Dorsolateral prefrontal cortex (tissue), 120 donors: ENCODE measurements at regions of chr10 and their contacts with region 1.

Region 1: GRCh38 chr10:114304017-114304570 is 65.0 kb downstream of the VWA2 start:
- DNase-seq: peak; percentile 74 to 93 (median 87)
- H3K4me3 ChIP-seq: peak overlapping the region; percentile 29 to 73 (median 60)
- H3K27ac ChIP-seq: peak overlapping the region in 58 of 59 donors; percentile 27 to 95 (median 79)
- H3K27me3 ChIP-seq: no peaks in the 10 kb centered on the region
- CTCF ChIP-seq: peak; percentile 76 to 94 (median 86)

Region 2: GRCh38 chr10:114403541-114404161 is 99.6 kb after region 1 on chr10:
- intact Hi-C with region 1: loop called in 1 of 2 experiments (anchors 5 kb)
- DNase-seq: peak in 2 of 10 donors; percentile 41 to 43
- H3K4me3 ChIP-seq: peak overlapping the region; percentile 36 to 75 (median 61)
- H3K27ac ChIP-seq: peak overlapping the region in 55 of 59 donors; percentile 16 to 85 (median 74)
- H3K27me3 ChIP-seq: peaks cover 0 to 71% (median 26%) of the 10 kb centered on the region in 45 donors
- CTCF ChIP-seq: peak in 19 of 56 donors; percentile 15 to 36 (median 21)

Region 3: DNA sequence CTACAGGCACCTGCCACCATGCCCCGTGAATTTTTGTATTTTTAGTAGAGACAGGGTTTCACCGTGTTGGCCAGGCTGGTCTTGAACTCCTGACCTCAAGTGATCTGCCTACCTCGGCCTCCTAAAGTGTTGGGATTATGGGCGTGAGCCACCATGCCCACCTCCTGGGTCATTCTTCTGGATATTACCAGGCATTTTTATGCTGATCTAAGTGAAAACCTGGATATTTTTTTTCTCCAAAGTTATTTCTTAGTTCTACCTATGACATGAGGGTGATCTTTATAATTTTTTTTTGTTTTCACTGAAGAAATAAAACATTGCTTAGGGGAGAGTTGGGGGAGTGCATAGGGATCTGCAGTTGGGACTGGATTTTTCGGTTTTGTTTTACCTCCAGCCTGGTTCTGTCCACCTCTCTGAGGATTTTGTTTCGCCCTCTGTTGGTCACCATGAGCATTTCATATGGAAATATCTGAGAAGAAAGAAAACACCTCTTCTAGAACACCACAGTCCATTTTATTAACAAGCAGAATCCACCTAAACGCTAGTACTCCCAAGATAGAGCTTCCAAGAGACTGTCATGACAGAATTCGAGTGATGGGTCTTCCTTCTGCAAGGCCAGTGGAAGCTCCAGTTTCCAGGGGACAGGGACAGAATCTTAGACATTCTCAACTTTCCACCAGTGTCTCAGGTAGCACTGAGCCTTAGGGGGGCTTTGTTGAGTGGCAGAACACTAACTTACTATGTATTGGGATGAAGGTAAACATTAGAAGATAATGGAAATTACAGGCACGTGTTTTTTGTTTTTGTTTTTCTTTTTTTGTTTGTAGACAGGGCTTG is 133.6 kb after region 1 on chr10:
- intact Hi-C with region 1: loop called in 1 of 2 experiments (anchors 10 kb)
- DNase-seq: no peak
- H3K4me3 ChIP-seq: no peak overlapping the region
- H3K27ac ChIP-seq: no peak overlapping the region
- H3K27me3 ChIP-seq: peaks cover 0 to 24% (median 0%) of the 10 kb centered on the region in 45 donors
- CTCF ChIP-seq: peak in 38 of 56 donors; percentile 10 to 48 (median 28)

Region 4: GRCh38 chr10:114458955-114459354 is 154.9 kb after region 1 on chr10:
- intact Hi-C with region 1: loop called (anchors 5 to 10 kb)
- DNase-seq: peak in 2 of 10 donors; percentile 25 to 34
- H3K4me3 ChIP-seq: no peak overlapping the region
- H3K27ac ChIP-seq: peak overlapping the region in 3 of 59 donors; percentile 5 to 40 (median 31)
- H3K27me3 ChIP-seq: peaks cover 0 to 2% (median 0%) of the 10 kb centered on the region in 45 donors
- CTCF ChIP-seq: peak in 46 of 56 donors; percentile 12 to 57 (median 33)

Region 5: GRCh38 chr10:114550756-114551635 is 246.9 kb after region 1 on chr10:
- intact Hi-C with region 1: loop called (anchors 5 to 10 kb)
- DNase-seq: no peak
- H3K4me3 ChIP-seq: peak overlapping the region in 45 of 59 donors; percentile 2 to 60 (median 33)
- H3K27ac ChIP-seq: peak overlapping the region in 48 of 59 donors; percentile 1 to 79 (median 58)
- H3K27me3 ChIP-seq: peaks cover 0 to 2% (median 0%) of the 10 kb centered on the region in 45 donors
- CTCF ChIP-seq: peak; percentile 54 to 85 (median 68)

Region 6: DNA sequence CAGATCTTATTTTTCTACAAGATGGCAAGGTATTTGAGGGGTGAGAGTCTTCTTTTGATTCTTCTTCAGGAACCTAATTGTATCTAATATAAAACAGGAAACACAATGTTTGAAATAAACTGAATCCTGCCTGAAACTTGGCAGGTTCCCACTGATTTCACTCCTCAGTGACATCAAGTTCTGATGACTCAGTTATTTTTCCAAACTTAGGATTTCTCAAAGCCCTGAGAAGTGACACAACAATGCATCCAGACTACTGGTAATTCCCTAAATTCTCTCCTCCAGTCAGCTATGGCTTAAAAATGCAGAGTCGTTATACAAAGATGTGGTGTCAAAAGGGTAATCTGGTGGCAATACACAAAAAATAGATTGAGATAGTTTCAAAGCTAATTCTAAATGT is 273.0 kb after region 1 on chr10:
- intact Hi-C with region 1: no loop called
- DNase-seq: no peak
- H3K4me3 ChIP-seq: no peak overlapping the region
- H3K27ac ChIP-seq: peak overlapping the region in 6 of 59 donors; percentile 3 to 67 (median 12)
- H3K27me3 ChIP-seq: no peaks in the 10 kb centered on the region
- CTCF ChIP-seq: no peak

Region 7: GRCh38 chr10:114779803-114780609 is 475.9 kb after region 1 on chr10:
- intact Hi-C with region 1: loop called (anchors 10 kb)
- DNase-seq: no peak
- H3K4me3 ChIP-seq: no peak overlapping the region
- H3K27ac ChIP-seq: no peak overlapping the region
- H3K27me3 ChIP-seq: peaks cover 0 to 6% (median 0%) of the 10 kb centered on the region in 45 donors
- CTCF ChIP-seq: no peak

Region 8: DNA sequence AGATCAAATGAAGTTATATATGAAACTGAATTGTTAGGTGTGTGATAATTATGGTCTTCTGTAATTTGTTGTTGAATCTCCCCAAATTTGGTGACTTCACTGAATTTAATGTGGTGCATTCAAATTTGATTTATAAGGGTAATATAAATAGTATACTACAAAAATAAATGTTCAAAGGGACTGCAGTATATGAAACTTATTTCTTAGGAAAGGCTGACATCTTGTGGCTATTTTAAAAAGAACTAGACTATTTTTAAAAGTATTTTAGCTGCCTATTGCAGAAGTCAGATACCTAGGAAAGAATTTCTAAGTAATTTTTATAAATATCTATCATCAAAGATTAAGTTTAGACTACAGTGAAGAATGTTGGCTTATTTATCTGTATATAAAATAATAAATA is 825.7 kb after region 1 on chr10:
- intact Hi-C with region 1: loop called in 1 of 2 experiments (anchors 5 kb)
- DNase-seq: no peak
- H3K4me3 ChIP-seq: no peak overlapping the region
- H3K27ac ChIP-seq: no peak overlapping the region
- H3K27me3 ChIP-seq: no peaks in the 10 kb centered on the region
- CTCF ChIP-seq: peak; percentile 14 to 83 (median 58)